ENCODE measurements at regions of chr1 and their contacts with region 1.

Region 1: GRCh38 chr1:42456010-42456758 is at the starts of genes PPCS and ZMYND12:
- H3K4me3 ChIP-seq: peak within 1 kb of the TSS; percentile 75
- H3K27ac ChIP-seq: peak within 1 kb of the TSS; percentile 76
- H3K4me1 ChIP-seq: 0 out of 2 replicates have a peak, but pooled peaks cover 3% of the 10 kb centered on the region
- CTCF ChIP-seq: 0 out of 2 replicates have a peak, but pooled peaks have one; percentile 12

Region 2: GRCh38 chr1:42420911-42421585 is 35.1 kb before region 1 on chr1:
- CTCF ChIA-PET with region 1: no interaction called
- POLR2A ChIA-PET with region 1: no interaction called
- H3K4me3 ChIP-seq: no peak overlapping the region
- H3K27ac ChIP-seq: no peak overlapping the region
- H3K4me1 ChIP-seq: peaks cover 11% of the 10 kb centered on the region
- CTCF ChIP-seq: no peak

Region 3: DNA sequence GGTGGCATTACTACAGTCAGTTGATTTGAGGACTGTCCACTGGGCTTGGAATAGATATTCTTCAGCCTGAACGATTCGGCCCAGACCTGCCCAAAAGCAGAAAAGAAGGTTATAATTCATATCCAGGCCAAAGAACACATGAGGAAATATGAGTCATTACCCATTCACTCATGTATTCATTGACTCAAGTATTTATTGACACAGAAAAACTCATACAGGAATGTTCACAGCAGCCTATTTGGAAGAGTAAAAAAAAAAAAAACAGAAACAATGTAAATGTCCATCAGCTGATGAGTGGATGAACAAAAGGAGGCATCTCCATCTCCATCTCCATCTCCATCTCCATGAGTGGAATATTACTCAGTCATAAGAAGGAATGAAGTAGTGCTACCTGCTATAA is 16.2 kb before region 1 on chr1:
- CTCF ChIA-PET with region 1: no interaction called
- POLR2A ChIA-PET with region 1: no interaction called
- H3K4me3 ChIP-seq: no peak overlapping the region
- H3K27ac ChIP-seq: no peak overlapping the region
- H3K4me1 ChIP-seq: no peaks in the 10 kb centered on the region
- CTCF ChIP-seq: no peak

Region 4: GRCh38 chr1:42469727-42470126 is 13.5 kb after region 1 on chr1:
- CTCF ChIA-PET with region 1: no interaction called
- POLR2A ChIA-PET with region 1: no interaction called
- H3K4me3 ChIP-seq: no peak overlapping the region
- H3K27ac ChIP-seq: no peak overlapping the region
- H3K4me1 ChIP-seq: no peaks in the 10 kb centered on the region
- CTCF ChIP-seq: no peak

Region 5: GRCh38 chr1:42963378-42964190 is 507.4 kb after region 1 on chr1:
- CTCF ChIA-PET with region 1: no interaction called
- POLR2A ChIA-PET with region 1: interaction called, 10 read pairs
- H3K4me3 ChIP-seq: no peak overlapping the region
- H3K27ac ChIP-seq: no peak overlapping the region
- H3K4me1 ChIP-seq: peaks cover 9% of the 10 kb centered on the region; the same call in 1 of the 2 replicates
- CTCF ChIP-seq: no peak

Measured in HEK293 (cell line).